Posterior vena cava (tissue), 2 donors: ENCODE measurements at regions of chr14 and their contacts with region 1.

Region 1: DNA sequence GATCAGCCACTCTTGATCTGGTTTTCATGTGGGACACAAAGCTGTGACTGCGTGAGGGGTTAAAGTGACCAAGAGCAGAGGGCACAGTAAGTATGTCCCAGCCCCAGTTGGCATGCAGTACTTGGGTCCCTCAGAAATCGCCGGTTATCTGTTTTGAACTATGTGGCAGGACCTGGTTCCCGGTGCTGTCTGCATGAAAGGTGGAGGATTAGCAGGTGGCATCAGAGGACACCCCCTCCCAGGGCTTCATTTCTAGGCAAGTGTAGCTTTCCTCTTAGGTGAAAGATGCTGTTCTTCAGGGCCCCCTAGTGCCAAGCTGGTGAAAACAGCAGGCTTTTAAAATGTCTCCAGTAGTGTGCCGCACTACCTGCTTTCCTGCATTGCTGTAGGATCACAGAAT is 57.1 kb downstream of the ATG14 start:
- DNase-seq: no peak

Region 2: GRCh38 chr14:55254581-55254980 is 99.9 kb before region 1 on chr14:
- intact Hi-C with region 1: loop called in 1 of 2 experiments (anchors 10 kb)
- DNase-seq: no peak

Region 3: GRCh38 chr14:55399852-55400251 is 45.4 kb after region 1 on chr14:
- intact Hi-C with region 1: no loop called
- DNase-seq: no peak